Heart right ventricle (tissue), 16 donors: ENCODE measurements at regions of chr4 and their contacts with region 1.

Region 1: DNA sequence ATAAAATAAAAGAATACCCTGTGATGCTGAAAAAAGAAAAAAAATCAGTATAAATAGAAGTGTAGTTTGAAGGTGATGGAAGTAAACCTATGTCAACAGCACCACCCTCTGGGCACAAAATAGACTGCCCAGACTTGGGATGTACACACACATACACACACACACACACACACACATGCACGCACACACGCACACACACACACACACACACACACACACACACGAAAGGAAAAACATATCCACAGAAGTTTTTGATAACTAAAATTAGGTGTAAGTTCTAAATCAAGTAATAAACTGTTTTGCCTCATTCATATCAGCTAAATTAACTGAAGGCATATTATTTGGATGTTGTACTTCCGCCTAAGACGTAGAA is 40.5 kb downstream of the ANXA5 start:
- DNase-seq: peak in 1 of 2 donors; percentile 60
- ATAC-seq: peak in 7 of 8 donors; percentile 58 to 88 (median 81)
- H3K4me3 ChIP-seq: no peak overlapping the region
- H3K27ac ChIP-seq: no peak overlapping the region
- H3K4me1 ChIP-seq: peaks cover 0 to 9% (median 0%) of the 10 kb centered on the region in 9 donors
- H3K27me3 ChIP-seq: no peaks in the 10 kb centered on the region
- CTCF ChIP-seq: peak in 8 of 9 donors; percentile 22 to 55 (median 42)

Region 2: GRCh38 chr4:121192480-121192879 is 463.8 kb before region 1 on chr4:
- intact Hi-C with region 1: loop called in 2 of 10 experiments (anchors 5 to 10 kb)
- DNase-seq: no peak
- ATAC-seq: no peak
- H3K4me3 ChIP-seq: peak overlapping the region in 1 of 10 donors; percentile 1
- H3K27ac ChIP-seq: no peak overlapping the region
- H3K4me1 ChIP-seq: peaks cover 0 to 8% (median 0%) of the 10 kb centered on the region in 9 donors
- H3K27me3 ChIP-seq: peaks cover 0 to 12% (median 0%) of the 10 kb centered on the region in 7 donors
- CTCF ChIP-seq: peak; percentile 32 to 82 (median 75)

Region 3: GRCh38 chr4:121370729-121371325 is 285.4 kb before region 1 on chr4:
- intact Hi-C with region 1: loop called in 8 of 10 experiments (anchors 2 to 10 kb)
- DNase-seq: peak in 1 of 2 donors; percentile 55
- ATAC-seq: peak in 4 of 8 donors; percentile 45 to 72 (median 58)
- H3K4me3 ChIP-seq: no peak overlapping the region
- H3K27ac ChIP-seq: no peak overlapping the region
- H3K4me1 ChIP-seq: peaks cover 0 to 11% (median 0%) of the 10 kb centered on the region in 9 donors
- H3K27me3 ChIP-seq: no peaks in the 10 kb centered on the region
- CTCF ChIP-seq: peak; percentile 39 to 81 (median 74)

Region 4: GRCh38 chr4:121462660-121463261 is 193.5 kb before region 1 on chr4:
- intact Hi-C with region 1: loop called in 7 of 10 experiments (anchors 1 to 10 kb)
- DNase-seq: peak in 1 of 2 donors; percentile 70
- ATAC-seq: peak; percentile 41 to 94 (median 77)
- H3K4me3 ChIP-seq: no peak overlapping the region
- H3K27ac ChIP-seq: peak overlapping the region in 1 of 10 donors; percentile 13
- H3K4me1 ChIP-seq: peaks cover 0 to 9% (median 4%) of the 10 kb centered on the region in 9 donors
- H3K27me3 ChIP-seq: no peaks in the 10 kb centered on the region
- CTCF ChIP-seq: peak; percentile 43 to 80 (median 72)

Region 5: DNA sequence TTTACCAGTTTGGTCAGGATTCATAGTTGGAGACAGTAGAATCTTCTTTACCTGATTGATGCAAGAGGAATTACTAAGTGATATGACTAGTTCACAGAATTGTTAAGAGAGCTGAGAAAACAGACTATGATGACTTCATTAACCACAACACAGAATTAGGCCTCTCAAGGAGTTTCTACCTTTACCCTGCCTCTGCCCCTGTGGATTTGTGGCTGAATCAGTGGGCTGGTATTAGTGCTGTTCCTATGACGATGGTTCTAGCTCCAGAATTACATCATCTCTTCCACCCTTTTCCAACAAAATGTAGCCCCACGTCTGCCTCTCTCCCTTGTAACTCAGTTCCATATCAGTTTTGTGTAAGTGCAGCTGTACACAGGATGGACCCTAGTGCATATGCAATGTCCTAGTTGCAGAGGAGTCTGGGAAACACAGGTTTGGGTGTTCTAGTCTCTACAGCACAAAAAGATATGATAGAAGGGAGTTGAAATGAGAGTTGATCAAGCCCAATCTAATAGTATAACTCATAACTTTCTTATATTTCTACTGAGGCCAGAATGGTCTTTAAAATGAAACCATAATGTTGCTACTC is 58.8 kb before region 1 on chr4:
- intact Hi-C with region 1: loop called in 1 of 10 experiments (anchors 5 kb)
- DNase-seq: no peak
- ATAC-seq: no peak
- H3K4me3 ChIP-seq: no peak overlapping the region
- H3K27ac ChIP-seq: peak overlapping the region in 1 of 10 donors; percentile 85
- H3K4me1 ChIP-seq: peaks cover 0 to 30% (median 4%) of the 10 kb centered on the region in 9 donors
- H3K27me3 ChIP-seq: no peaks in the 10 kb centered on the region
- CTCF ChIP-seq: no peak

Region 6: GRCh38 chr4:121668368-121669162 is 12.3 kb after region 1 on chr4:
- intact Hi-C with region 1: no loop called
- DNase-seq: no peak
- ATAC-seq: peak in 3 of 8 donors; percentile 14 to 43 (median 42)
- H3K4me3 ChIP-seq: no peak overlapping the region
- H3K27ac ChIP-seq: peak overlapping the region in 1 of 10 donors; percentile 5
- H3K4me1 ChIP-seq: peaks cover 0 to 6% (median 0%) of the 10 kb centered on the region in 9 donors
- H3K27me3 ChIP-seq: no peaks in the 10 kb centered on the region
- CTCF ChIP-seq: no peak